Activated naive CD4-positive, alpha-beta T cell treated with anti-CD3 and anti-CD28 coated beads for 36 hours (primary cell): ENCODE measurements at regions of chr17 and their contacts with region 1.

Region 1: GRCh38 chr17:78013683-78014467 is 55.4 kb downstream of the TNRC6C start:
- DNase-seq: peak; percentile 77
- H3K4me3 Mint-ChIP-seq: no peak overlapping the region
- H3K27ac Mint-ChIP-seq: no peak overlapping the region
- H3K4me1 Mint-ChIP-seq: peaks cover 22% of the 10 kb centered on the region
- H3K27me3 Mint-ChIP-seq: no peaks in the 10 kb centered on the region

Region 2: GRCh38 chr17:77273397-77274085 is 740.3 kb before region 1 on chr17:
- CTCF ChIA-PET with region 1: no interaction called
- intact Hi-C with region 1: no loop called
- DNase-seq: no peak
- H3K4me3 Mint-ChIP-seq: no peak overlapping the region
- H3K27ac Mint-ChIP-seq: no peak overlapping the region
- H3K4me1 Mint-ChIP-seq: no peaks in the 10 kb centered on the region
- H3K27me3 Mint-ChIP-seq: peaks cover 1% of the 10 kb centered on the region

Region 3: GRCh38 chr17:77542551-77543490 is 471.1 kb before region 1 on chr17:
- CTCF ChIA-PET with region 1: interaction called, 26 read pairs
- intact Hi-C with region 1: loop called (anchors 1 kb)
- DNase-seq: peak; percentile 82
- H3K4me3 Mint-ChIP-seq: no peak overlapping the region
- H3K27ac Mint-ChIP-seq: no peak overlapping the region
- H3K4me1 Mint-ChIP-seq: no peaks in the 10 kb centered on the region
- H3K27me3 Mint-ChIP-seq: no peaks in the 10 kb centered on the region

Region 4: DNA sequence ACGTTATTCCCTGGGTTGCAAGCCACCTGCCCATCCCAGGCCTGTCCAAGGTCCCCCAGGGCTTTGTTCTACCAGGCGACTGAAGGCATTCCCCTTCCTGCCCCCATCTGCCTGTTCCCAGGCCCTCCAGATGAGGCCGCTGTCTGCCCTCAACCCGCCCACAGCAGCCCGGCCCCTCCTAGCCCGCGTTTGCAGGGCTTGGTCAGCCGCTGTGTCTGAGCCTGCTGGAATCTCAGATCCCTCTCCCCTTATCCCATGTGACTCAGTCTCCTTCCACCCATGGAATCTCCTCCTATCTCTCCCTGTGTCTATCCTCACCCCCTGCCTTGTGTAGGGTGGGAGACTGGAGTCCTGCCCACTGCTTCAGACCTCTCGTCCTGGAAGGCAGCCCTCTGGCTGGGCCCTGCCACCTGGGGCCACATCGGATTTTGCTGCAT is 241.4 kb before region 1 on chr17:
- CTCF ChIA-PET with region 1: interaction called, 15 read pairs
- intact Hi-C with region 1: loop called (anchors 1 kb)
- DNase-seq: peak; percentile 81
- H3K4me3 Mint-ChIP-seq: no peak overlapping the region
- H3K27ac Mint-ChIP-seq: no peak overlapping the region
- H3K4me1 Mint-ChIP-seq: peaks cover 10% of the 10 kb centered on the region
- H3K27me3 Mint-ChIP-seq: no peaks in the 10 kb centered on the region

Region 5: DNA sequence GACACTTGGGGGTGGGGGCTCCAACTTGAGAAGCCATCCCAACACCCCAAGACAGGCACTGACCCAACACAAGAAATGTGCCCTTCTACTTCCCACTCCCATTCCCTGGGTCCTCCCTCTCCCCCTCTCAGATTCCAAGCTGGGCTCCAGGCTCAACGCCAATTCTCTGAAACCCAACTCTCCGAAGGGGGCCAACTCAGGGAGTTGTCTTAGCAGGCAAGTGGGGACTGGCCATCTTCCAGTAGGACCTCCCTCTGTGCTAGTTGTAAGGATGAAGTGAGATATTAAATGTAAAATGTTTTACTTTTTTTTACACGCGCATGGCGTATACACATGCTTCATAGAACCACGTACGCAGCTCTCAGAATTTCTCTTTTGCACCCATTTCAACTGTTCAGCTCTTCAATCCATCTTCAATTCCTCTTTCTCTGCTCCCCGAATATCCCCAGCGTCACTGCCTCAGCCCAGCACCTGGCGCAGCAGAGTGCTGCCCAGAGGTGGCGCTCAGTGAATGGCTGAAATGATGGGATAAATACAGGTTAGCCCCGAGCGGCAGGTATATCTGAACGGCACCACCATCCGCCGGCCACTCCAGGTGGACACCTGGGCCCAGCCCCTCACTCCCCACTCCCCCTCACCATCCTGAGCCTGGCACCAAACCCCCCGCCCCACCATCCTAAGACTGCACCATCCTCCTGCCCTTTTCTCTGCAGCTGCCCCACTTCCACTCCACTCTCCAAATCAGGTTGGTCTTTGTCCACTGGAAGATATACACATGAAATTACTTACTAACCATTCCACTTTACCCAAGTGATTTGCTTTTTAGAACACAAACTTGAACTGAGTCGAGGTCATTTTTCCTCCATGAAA is 99.3 kb before region 1 on chr17:
- CTCF ChIA-PET with region 1: interaction called, 14 read pairs
- intact Hi-C with region 1: loop called (anchors 1 kb)
- DNase-seq: peak; percentile 42
- H3K4me3 Mint-ChIP-seq: no peak overlapping the region
- H3K27ac Mint-ChIP-seq: no peak overlapping the region
- H3K4me1 Mint-ChIP-seq: peaks cover 12% of the 10 kb centered on the region
- H3K27me3 Mint-ChIP-seq: peaks cover 28% of the 10 kb centered on the region

Region 6: GRCh38 chr17:77957857-77958715 is 55.8 kb before region 1 on chr17 and contains the start of gene TNRC6C:
- CTCF ChIA-PET with region 1: interaction called, 29 read pairs
- intact Hi-C with region 1: loop called (anchors 2 kb)
- DNase-seq: peak; percentile 100
- H3K4me3 Mint-ChIP-seq: peak within 1 kb of the TSS; percentile 89
- H3K27ac Mint-ChIP-seq: peak within 1 kb of the TSS; percentile 84
- H3K4me1 Mint-ChIP-seq: peaks cover 32% of the 10 kb centered on the region
- H3K27me3 Mint-ChIP-seq: peaks cover 4% of the 10 kb centered on the region
- total RNA-seq, gene TNRC6C: 11.4 to 12.8 TPM

Region 7: GRCh38 chr17:77963441-77963840 is 50.4 kb before region 1 on chr17:
- CTCF ChIA-PET with region 1: interaction called, 29 read pairs
- intact Hi-C with region 1: loop called (anchors 2 kb)
- DNase-seq: peak; percentile 63
- H3K4me3 Mint-ChIP-seq: no peak overlapping the region
- H3K27ac Mint-ChIP-seq: no peak overlapping the region
- H3K4me1 Mint-ChIP-seq: peaks cover 67% of the 10 kb centered on the region
- H3K27me3 Mint-ChIP-seq: no peaks in the 10 kb centered on the region

Region 8: GRCh38 chr17:77968788-77969187 is 45.1 kb before region 1 on chr17:
- CTCF ChIA-PET with region 1: interaction called, 29 read pairs
- intact Hi-C with region 1: no loop called
- DNase-seq: no peak
- H3K4me3 Mint-ChIP-seq: no peak overlapping the region
- H3K27ac Mint-ChIP-seq: no peak overlapping the region
- H3K4me1 Mint-ChIP-seq: peaks cover 82% of the 10 kb centered on the region
- H3K27me3 Mint-ChIP-seq: no peaks in the 10 kb centered on the region